HepG2 (cell line): ENCODE measurements at regions of chr1 and their contacts with region 1.

Region 1: DNA sequence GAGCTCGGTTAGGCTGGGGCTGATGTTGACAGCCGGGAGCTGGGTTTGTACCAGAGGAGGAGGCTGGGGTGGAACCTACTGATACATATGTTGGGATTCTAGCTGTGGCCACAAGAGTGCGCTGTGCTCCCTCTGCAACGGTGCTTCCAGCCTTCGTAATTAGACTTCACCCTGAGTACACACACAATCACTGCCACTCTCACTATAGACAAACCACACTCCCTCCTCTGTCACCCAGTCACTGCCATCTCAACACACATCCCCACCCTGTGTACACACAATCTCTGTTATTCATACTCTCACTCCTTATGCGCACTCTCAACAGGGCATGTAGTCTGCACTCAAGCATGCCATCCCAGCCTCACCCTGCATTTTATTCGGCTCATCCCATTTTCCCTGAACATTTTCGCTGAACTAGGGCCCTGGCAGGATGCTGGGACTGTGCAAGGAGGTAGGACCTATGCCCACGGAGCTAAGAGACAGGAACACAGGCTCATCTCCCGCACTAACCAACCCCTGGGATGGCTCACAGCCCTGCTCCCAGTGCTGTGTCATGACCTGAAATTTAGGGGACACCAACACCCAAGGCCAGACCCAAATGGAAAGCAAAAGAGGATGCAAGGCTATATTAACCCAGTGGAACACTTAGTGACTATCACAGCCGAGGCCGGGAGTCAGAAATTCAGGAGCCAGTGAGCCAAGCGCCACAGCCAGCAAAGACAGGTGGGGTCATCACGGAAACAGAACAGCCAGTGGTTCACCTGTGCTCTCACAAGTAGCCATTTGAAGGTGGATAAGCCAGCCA is 5.7 kb downstream of the GJB3 start:
- DNase-seq: peak; percentile 54
- ATAC-seq: peak; percentile 86
- H3K4me3 ChIP-seq: no peak overlapping the region
- H3K27ac ChIP-seq: no peak overlapping the region
- H3K4me1 ChIP-seq: no peaks in the 10 kb centered on the region
- H3K27me3 ChIP-seq: peaks cover 3 to 15% of the 10 kb centered on the region in 2 experiments; a peak in 4 of 5 replicates
- CTCF ChIP-seq: peak; percentile 93
- EP300 ChIP-seq: no peak
- POLR2A ChIP-seq: no peak
- RAD21 ChIP-seq: peak; percentile 80

Region 2: GRCh38 chr1:34800214-34800613 is 13.5 kb after region 1 on chr1:
- CTCF ChIA-PET with region 1: no interaction called
- POLR2A ChIA-PET with region 1: no interaction called
- in situ Hi-C with region 1: no loop called
- intact Hi-C with region 1: no loop called
- DNase-seq: no peak
- ATAC-seq: no peak
- H3K4me3 ChIP-seq: no peak overlapping the region
- H3K27ac ChIP-seq: no peak overlapping the region
- H3K4me1 ChIP-seq: no peaks in the 10 kb centered on the region
- H3K27me3 ChIP-seq: peaks cover 1 to 19% of the 10 kb centered on the region in 2 experiments; a peak in 4 of 5 replicates
- CTCF ChIP-seq: no peak
- EP300 ChIP-seq: no peak
- POLR2A ChIP-seq: no peak
- RAD21 ChIP-seq: no peak

Region 3: GRCh38 chr1:34852677-34853217 is 66.0 kb after region 1 on chr1:
- CTCF ChIA-PET with region 1: interaction called, 81 read pairs
- POLR2A ChIA-PET with region 1: no interaction called
- in situ Hi-C with region 1: loop called (anchors 5 kb)
- intact Hi-C with region 1: loop called (anchors 1 kb)
- DNase-seq: peak; percentile 92
- ATAC-seq: peak; percentile 98
- H3K4me3 ChIP-seq: no peak overlapping the region
- H3K27ac ChIP-seq: no peak overlapping the region
- H3K4me1 ChIP-seq: peaks cover 7% of the 10 kb centered on the region
- H3K27me3 ChIP-seq: no peaks in the 10 kb centered on the region
- CTCF ChIP-seq: peak; percentile 99
- EP300 ChIP-seq: no peak
- POLR2A ChIP-seq: no peak
- RAD21 ChIP-seq: peak; percentile 83